ENCODE measurements at regions of chr6 and their contacts with region 1.

Region 1: GRCh38 chr6:3732345-3733141 is 19.0 kb downstream of the PXDC1 start:
- DNase-seq: peak; percentile 34 to 70 (median 60)
- ATAC-seq: peak; percentile 85
- H3K4me3 ChIP-seq: no peak overlapping the region
- H3K4me3 Mint-ChIP-seq: peak overlapping the region in 1 of 10 donors; percentile 42
- H3K27ac ChIP-seq: no peak overlapping the region
- H3K27ac Mint-ChIP-seq: peak overlapping the region in 1 of 9 donors; percentile 88
- H3K4me1 ChIP-seq: no peaks in the 10 kb centered on the region
- H3K4me1 Mint-ChIP-seq: peaks cover 0 to 4% (median 3%) of the 10 kb centered on the region in 7 donors
- H3K27me3 ChIP-seq: no peaks in the 10 kb centered on the region
- H3K27me3 Mint-ChIP-seq: peaks cover 6 to 22% (median 15%) of the 10 kb centered on the region in 5 donors

Region 2: DNA sequence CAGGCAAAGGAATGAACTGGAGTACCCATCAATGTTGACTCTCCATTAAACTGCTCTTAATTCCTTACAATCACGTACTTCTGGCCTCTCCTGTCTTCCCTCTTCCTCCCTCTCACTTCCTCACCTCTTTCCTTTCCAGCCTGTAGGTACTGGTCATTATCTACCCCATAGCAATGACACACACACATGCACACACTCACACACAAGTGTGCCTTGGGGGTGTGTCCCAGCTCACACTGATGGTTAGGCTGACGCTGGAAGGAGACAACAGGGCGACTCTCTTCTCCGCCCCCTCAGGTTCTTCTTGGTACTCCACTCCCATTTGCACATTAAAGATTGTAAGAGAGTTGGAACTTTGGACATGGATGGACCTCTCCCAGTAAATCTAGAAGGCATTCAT is 815.5 kb before region 1 on chr6:
- CTCF ChIA-PET with region 1: no interaction called
- POLR2A ChIA-PET with region 1: no interaction called
- intact Hi-C with region 1: no loop called
- DNase-seq: no peak
- ATAC-seq: no peak
- H3K4me3 ChIP-seq: no peak overlapping the region
- H3K4me3 Mint-ChIP-seq: no peak overlapping the region
- H3K27ac ChIP-seq: no peak overlapping the region
- H3K27ac Mint-ChIP-seq: no peak overlapping the region
- H3K4me1 ChIP-seq: peaks cover 0 to 15% of the 10 kb centered on the region in 2 donors
- H3K4me1 Mint-ChIP-seq: peaks cover 9 to 29% (median 10%) of the 10 kb centered on the region in 7 donors
- H3K27me3 ChIP-seq: no peaks in the 10 kb centered on the region
- H3K27me3 Mint-ChIP-seq: no peaks in the 10 kb centered on the region

Region 3: GRCh38 chr6:3410385-3411360 is 321.9 kb before region 1 on chr6:
- CTCF ChIA-PET with region 1: interaction called, 18 read pairs
- POLR2A ChIA-PET with region 1: no interaction called
- intact Hi-C with region 1: loop called (anchors 1 to 2 kb)
- DNase-seq: peak; percentile 30 to 72 (median 60)
- ATAC-seq: peak; percentile 78
- H3K4me3 ChIP-seq: no peak overlapping the region
- H3K4me3 Mint-ChIP-seq: no peak overlapping the region
- H3K27ac ChIP-seq: no peak overlapping the region
- H3K27ac Mint-ChIP-seq: peak overlapping the region in 6 of 9 donors; percentile 34 to 84 (median 66)
- H3K4me1 ChIP-seq: peaks cover 0 to 11% of the 10 kb centered on the region in 2 donors
- H3K4me1 Mint-ChIP-seq: peaks cover 2 to 28% (median 20%) of the 10 kb centered on the region in 7 donors
- H3K27me3 ChIP-seq: no peaks in the 10 kb centered on the region
- H3K27me3 Mint-ChIP-seq: peaks cover 0 to 4% (median 0%) of the 10 kb centered on the region in 5 donors

Region 4: GRCh38 chr6:3707024-3707423 is 25.5 kb before region 1 on chr6:
- CTCF ChIA-PET with region 1: no interaction called
- POLR2A ChIA-PET with region 1: no interaction called
- intact Hi-C with region 1: no loop called
- DNase-seq: no peak
- ATAC-seq: peak; percentile 24
- H3K4me3 ChIP-seq: no peak overlapping the region
- H3K4me3 Mint-ChIP-seq: no peak overlapping the region
- H3K27ac ChIP-seq: no peak overlapping the region
- H3K27ac Mint-ChIP-seq: no peak overlapping the region
- H3K4me1 ChIP-seq: no peaks in the 10 kb centered on the region
- H3K4me1 Mint-ChIP-seq: peaks cover 0 to 4% (median 0%) of the 10 kb centered on the region in 7 donors
- H3K27me3 ChIP-seq: no peaks in the 10 kb centered on the region
- H3K27me3 Mint-ChIP-seq: peaks cover 6 to 26% (median 15%) of the 10 kb centered on the region in 5 donors

Region 5: DNA sequence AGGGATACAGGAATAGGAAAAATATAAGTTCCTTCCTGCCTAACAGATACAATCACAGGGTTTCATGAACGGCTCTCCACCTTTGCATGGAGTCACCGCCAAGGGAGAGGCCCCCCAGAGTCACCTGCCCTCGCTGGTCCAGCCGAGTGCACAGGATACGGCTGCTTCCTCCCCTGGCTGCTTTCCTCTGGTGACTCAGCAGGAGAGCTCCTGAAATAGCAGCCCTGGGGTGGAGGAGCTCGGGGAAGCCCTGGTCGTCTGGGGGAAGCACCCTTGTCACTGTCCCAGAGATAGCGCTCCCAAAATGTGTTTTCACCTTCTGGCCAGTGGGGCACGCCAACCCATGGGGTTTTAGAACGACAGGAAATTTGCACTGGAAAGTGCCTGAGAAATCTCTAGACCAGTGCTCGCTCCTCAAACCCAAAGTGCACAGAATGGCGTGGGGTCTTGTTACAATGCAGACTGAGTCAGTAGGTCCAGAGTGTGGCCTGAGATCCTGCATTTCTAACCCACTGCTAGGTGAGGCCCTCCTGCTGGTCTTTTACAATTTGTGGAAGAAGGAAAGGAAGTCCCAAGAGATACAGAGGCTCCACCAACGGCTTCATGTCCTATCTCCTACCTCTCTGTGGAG is 80.7 kb after region 1 on chr6:
- CTCF ChIA-PET with region 1: no interaction called
- POLR2A ChIA-PET with region 1: no interaction called
- intact Hi-C with region 1: no loop called
- DNase-seq: no peak
- ATAC-seq: peak; percentile 34
- H3K4me3 ChIP-seq: no peak overlapping the region
- H3K4me3 Mint-ChIP-seq: no peak overlapping the region
- H3K27ac ChIP-seq: no peak overlapping the region
- H3K27ac Mint-ChIP-seq: no peak overlapping the region
- H3K4me1 ChIP-seq: no peaks in the 10 kb centered on the region
- H3K4me1 Mint-ChIP-seq: peaks cover 0 to 4% (median 0%) of the 10 kb centered on the region in 7 donors
- H3K27me3 ChIP-seq: no peaks in the 10 kb centered on the region
- H3K27me3 Mint-ChIP-seq: peaks cover 0 to 18% (median 4%) of the 10 kb centered on the region in 5 donors